ENCODE measurements at regions of chr12 and their contacts with region 1.

Region 1: GRCh38 chr12:81683881-81684280 is 75.3 kb downstream of the PPFIA2 start:
- DNase-seq: no peak
- H3K4me3 ChIP-seq: no peak overlapping the region
- H3K27ac ChIP-seq: no peak overlapping the region
- H3K4me1 ChIP-seq: no peaks in the 10 kb centered on the region
- H3K27me3 ChIP-seq: no peaks in the 10 kb centered on the region
- CTCF ChIP-seq: no peak

Region 2: DNA sequence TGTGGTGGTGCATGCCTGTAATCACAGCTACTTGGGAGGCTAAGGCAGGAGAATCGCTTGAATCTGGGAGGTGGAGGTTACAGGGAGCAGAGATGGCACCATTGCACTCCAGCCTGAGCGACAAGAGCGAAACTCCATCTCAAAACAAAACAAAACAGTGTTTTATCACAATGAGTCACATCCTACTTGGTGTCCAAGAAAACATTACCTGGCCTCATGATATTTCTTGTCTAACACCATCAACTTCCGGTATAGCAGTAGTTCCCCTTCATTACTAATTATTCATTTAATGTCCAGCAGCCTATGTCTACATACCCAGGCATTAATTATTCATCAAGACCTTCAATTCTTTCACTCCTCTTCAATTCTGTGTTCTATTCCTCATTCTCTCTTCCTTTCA is 558.8 kb after region 1 on chr12:
- CTCF ChIA-PET with region 1: no interaction called
- POLR2A ChIA-PET with region 1: interaction called, 11 read pairs
- intact Hi-C with region 1: no loop called
- DNase-seq: no peak
- H3K4me3 ChIP-seq: no peak overlapping the region
- H3K27ac ChIP-seq: no peak overlapping the region
- H3K4me1 ChIP-seq: no peaks in the 10 kb centered on the region
- H3K27me3 ChIP-seq: no peaks in the 10 kb centered on the region
- CTCF ChIP-seq: no peak

Region 3: DNA sequence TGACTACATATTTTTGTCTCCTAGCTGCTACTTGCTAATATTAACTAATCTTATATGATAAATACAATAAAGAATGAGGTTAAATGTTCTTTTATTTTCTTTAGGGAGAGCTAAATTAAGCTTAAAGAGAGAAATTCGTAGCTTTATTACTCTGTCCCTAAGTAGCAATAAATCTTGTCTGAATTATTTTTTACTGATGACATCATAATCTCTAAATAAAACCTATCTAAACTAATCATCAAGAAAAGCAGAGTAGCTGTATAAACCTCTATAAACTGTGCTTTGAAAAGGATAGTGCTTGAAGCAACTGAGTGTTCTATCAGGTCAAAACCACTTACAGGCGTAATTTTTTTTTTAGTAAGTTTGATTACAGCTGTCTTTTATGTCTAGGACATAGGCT is 716.9 kb after region 1 on chr12:
- CTCF ChIA-PET with region 1: no interaction called
- POLR2A ChIA-PET with region 1: no interaction called
- intact Hi-C with region 1: no loop called
- DNase-seq: no peak
- H3K4me3 ChIP-seq: no peak overlapping the region
- H3K27ac ChIP-seq: no peak overlapping the region
- H3K4me1 ChIP-seq: no peaks in the 10 kb centered on the region
- H3K27me3 ChIP-seq: no peaks in the 10 kb centered on the region
- CTCF ChIP-seq: no peak